Heart right ventricle (tissue), 16 donors: ENCODE measurements at regions of chr13 and their contacts with region 1.

Region 1: GRCh38 chr13:111460548-111461444 is 140.4 kb downstream of the TEX29 start:
- DNase-seq: peak in 1 of 2 donors; percentile 31
- ATAC-seq: peak; percentile 55 to 83 (median 75)
- H3K4me3 ChIP-seq: no peak overlapping the region
- H3K27ac ChIP-seq: no peak overlapping the region
- H3K4me1 ChIP-seq: no peaks in the 10 kb centered on the region
- H3K27me3 ChIP-seq: peaks cover 0 to 70% (median 37%) of the 10 kb centered on the region in 7 donors
- CTCF ChIP-seq: peak in 8 of 9 donors; percentile 21 to 60 (median 48)

Region 2: DNA sequence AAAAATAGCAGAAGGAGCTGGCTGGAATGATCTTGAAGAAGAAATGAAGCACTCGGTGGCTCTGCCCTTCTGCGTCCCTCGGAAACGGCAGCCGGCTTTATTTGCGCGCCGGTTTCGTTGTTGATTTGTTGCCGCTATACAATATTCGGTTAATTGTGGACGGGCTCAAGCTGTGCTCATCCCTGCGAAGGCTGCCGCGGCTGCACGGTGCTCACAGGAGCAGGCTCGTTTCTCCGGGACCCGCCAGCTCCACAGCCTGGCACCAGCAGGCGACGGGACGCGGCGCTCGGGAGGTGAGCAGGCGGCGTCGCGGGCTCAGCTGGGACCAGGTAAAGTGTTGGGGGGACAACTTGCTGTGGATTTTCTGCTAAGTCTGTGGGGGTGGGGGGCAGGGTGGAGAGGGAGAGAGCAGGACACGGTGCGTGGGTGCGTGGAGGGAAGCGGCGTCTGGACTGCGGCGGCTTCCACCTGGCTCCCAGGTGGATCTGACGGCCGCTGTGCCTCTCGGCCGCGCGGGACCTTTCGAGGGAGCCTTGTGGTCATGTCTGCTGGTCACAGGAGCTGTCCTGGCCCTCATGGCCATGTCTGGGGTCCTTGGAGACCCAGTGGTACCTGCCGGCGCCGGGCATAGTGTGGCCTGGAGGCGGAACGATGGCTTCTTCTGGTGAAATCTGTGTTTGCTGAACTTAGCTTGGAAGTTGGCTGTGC is 49.5 kb before region 1 on chr13:
- intact Hi-C with region 1: loop called in 1 of 10 experiments (anchors 2 kb)
- DNase-seq: no peak
- ATAC-seq: no peak
- H3K4me3 ChIP-seq: no peak overlapping the region
- H3K27ac ChIP-seq: no peak overlapping the region
- H3K4me1 ChIP-seq: no peaks in the 10 kb centered on the region
- H3K27me3 ChIP-seq: peaks cover 0 to 76% (median 70%) of the 10 kb centered on the region in 7 donors
- CTCF ChIP-seq: no peak